AG04449 (cell line): ENCODE measurements at regions of chr20 and their contacts with region 1.

Region 1: GRCh38 chr20:561437-562231 is 18.0 kb upstream of the CSNK2A1 start:
- DNase-seq: no peak
- H3K4me3 ChIP-seq: no peak overlapping the region
- CTCF ChIP-seq: peak; percentile 94

Region 2: DNA sequence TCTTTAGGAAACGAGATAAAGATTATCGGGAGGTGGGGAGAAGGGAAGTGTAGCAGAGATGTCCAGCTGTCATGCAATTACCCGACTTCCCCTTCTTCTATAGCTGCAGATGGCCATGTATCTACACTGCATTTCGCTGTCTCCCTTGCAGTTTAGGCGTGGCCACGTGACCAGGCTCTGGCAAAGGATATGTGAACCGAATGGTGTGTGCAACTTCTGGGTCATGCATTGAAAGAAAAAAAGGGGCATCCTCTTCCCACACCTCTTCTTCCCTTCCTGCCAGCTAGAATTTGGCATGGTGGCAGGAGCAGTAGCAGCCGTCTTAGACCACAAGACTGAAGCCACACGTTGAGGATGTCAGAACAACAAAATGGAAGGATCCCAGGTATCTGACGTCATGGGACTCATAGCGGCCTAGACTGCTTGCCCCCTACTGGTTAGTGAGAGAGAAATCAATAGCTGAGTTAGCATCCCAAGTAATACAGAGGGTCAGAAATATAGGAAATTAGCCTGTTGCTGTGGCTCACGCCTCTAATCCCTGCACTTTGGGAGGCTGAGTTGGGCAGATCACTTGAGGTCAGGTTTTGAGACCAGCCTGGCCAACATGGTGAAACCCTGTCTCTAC is 15.6 kb after region 1 on chr20:
- CTCF ChIA-PET with region 1: interaction called, 19 read pairs
- POLR2A ChIA-PET with region 1: no interaction called
- DNase-seq: no peak
- H3K4me3 ChIP-seq: no peak overlapping the region
- CTCF ChIP-seq: peak; percentile 20

Region 3: GRCh38 chr20:667391-667964 is 105.8 kb after region 1 on chr20:
- CTCF ChIA-PET with region 1: interaction called, 82 read pairs
- POLR2A ChIA-PET with region 1: no interaction called
- DNase-seq: no peak
- H3K4me3 ChIP-seq: no peak overlapping the region
- CTCF ChIP-seq: peak; percentile 87

Region 4: GRCh38 chr20:733861-734260 is 172.2 kb after region 1 on chr20:
- CTCF ChIA-PET with region 1: interaction called, 122 read pairs
- POLR2A ChIA-PET with region 1: no interaction called
- DNase-seq: no peak
- H3K4me3 ChIP-seq: no peak overlapping the region
- CTCF ChIP-seq: no peak